Activated naive CD4-positive, alpha-beta T cell treated with anti-CD3 and anti-CD28 coated beads for 36 hours (primary cell): ENCODE measurements at regions of chr4 and their contacts with region 1.

Region 1: DNA sequence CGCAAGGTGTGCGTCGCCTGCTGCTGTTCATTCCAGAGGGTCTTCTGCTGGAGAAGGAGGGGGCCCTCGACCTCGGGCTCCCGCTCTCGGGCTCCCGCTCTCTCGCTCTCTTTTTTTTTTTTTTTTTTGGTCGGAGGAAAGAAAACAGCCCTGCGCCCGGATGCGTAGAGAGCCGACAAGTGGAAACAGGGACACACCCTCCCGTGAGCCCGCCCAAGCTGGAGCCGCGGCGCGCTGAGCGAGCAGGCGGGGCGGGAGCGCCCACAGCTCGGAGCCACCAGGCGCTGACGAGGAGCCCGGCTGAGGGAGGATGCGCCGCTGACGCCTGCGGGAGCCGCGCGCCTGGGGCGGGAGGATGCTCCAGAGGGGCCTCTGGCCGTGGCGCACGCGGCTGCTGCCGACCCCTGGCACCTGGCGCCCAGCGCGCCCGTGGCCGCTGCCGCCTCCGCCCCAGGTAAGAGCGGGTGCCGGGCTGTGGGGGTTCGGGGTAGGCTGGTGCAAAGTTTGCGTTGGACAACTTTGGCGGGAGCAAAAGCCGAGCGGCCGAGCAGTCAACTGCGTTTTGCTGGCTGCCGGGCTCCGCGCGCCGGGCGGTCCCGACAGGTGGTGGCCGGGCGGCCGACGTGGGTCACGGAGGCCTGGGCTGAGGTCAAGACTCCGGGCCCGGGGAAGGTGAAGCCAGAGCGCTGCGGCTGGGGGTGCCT is at the start of gene MCUB:
- DNase-seq: peak; percentile 94
- H3K4me3 Mint-ChIP-seq: peak within 1 kb of the TSS; percentile 88
- H3K27ac Mint-ChIP-seq: peak within 1 kb of the TSS; percentile 95
- H3K4me1 Mint-ChIP-seq: peaks cover 54% of the 10 kb centered on the region
- H3K27me3 Mint-ChIP-seq: no peaks in the 10 kb centered on the region
- total RNA-seq, gene MCUB: 69.1 to 71.8 TPM

Region 2: DNA sequence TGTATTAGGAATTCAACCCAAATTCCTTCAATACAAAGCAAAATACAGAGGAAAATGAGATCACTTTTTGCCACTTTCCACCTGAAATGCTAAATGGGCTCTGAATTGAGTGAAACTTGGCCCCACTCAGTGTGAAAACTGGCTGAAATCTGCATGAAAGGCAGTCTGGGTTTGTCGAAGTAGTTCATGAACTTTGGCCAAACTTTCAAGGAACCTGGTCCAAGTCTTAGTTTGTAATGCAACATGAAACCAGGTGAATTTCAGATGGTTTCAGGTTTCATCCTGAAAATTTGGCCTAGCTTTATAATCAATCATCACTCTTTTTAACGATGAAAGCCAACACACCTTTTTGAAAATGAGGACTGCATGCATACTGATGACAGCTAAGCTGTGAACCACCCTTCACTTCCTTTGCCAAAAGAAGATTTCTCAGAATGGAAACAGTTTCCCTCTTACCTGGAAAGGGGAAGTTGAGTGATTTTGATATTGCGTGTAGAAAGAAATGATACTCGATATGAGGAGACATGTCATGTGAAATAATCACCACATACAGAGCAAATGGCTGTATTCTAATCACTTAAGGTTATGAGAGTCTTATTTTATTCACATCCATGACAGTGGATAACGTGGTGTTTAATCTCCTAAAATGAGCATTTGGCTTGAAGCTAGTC is 587.4 kb before region 1 on chr4:
- CTCF ChIA-PET with region 1: no interaction called
- intact Hi-C with region 1: loop called (anchors 2 kb)
- DNase-seq: peak; percentile 11
- H3K4me3 Mint-ChIP-seq: no peak overlapping the region
- H3K27ac Mint-ChIP-seq: peak overlapping the region; percentile 76
- H3K4me1 Mint-ChIP-seq: peaks cover 23% of the 10 kb centered on the region
- H3K27me3 Mint-ChIP-seq: no peaks in the 10 kb centered on the region

Region 3: DNA sequence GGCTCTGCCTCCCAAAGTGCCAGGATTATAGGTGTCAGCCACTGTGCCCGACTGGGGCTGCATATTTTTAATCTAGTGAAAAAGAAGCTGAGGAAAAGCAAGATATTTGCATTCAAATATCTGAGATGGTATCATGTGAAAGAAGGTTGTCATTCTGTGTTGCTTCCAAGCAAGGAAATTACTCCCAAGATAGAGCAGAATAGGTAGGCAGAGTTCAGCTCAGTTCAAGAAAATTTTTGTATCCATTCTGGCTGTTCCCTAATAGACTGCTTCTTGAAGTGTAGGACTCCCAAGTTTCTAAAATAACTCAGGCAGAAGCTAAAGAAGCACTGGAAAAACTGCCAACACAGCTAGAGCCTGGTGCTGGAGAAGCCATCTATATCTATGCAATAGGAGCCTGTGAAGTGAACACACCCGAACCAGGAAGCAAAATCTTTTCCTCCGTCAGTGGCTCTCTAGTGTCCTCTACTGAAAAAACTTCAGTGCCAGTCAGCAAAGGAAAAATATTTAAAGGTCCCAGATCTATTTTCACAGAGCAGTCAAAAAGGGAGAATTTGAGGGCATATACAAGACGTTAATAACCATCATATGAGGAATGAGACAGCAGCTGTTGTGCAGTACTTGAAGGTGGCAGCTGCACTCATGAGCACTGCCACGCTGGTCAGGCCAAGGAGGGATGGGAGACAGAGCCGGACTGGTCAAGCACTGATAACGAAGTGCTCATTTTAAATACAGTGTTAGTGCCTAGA is 14.1 kb after region 1 on chr4:
- CTCF ChIA-PET with region 1: interaction called, 13 read pairs
- intact Hi-C with region 1: loop called (anchors 1 kb)
- DNase-seq: peak; percentile 42
- H3K4me3 Mint-ChIP-seq: peak overlapping the region; percentile 39
- H3K27ac Mint-ChIP-seq: no peak overlapping the region
- H3K4me1 Mint-ChIP-seq: peaks cover 74% of the 10 kb centered on the region
- H3K27me3 Mint-ChIP-seq: no peaks in the 10 kb centered on the region

Region 4: GRCh38 chr4:109648266-109648996 is 88.3 kb after region 1 on chr4:
- CTCF ChIA-PET with region 1: no interaction called
- intact Hi-C with region 1: loop called (anchors 1 kb)
- DNase-seq: no peak
- H3K4me3 Mint-ChIP-seq: peak overlapping the region; percentile 59
- H3K27ac Mint-ChIP-seq: peak overlapping the region; percentile 77
- H3K4me1 Mint-ChIP-seq: peaks cover 45% of the 10 kb centered on the region
- H3K27me3 Mint-ChIP-seq: no peaks in the 10 kb centered on the region

Region 5: DNA sequence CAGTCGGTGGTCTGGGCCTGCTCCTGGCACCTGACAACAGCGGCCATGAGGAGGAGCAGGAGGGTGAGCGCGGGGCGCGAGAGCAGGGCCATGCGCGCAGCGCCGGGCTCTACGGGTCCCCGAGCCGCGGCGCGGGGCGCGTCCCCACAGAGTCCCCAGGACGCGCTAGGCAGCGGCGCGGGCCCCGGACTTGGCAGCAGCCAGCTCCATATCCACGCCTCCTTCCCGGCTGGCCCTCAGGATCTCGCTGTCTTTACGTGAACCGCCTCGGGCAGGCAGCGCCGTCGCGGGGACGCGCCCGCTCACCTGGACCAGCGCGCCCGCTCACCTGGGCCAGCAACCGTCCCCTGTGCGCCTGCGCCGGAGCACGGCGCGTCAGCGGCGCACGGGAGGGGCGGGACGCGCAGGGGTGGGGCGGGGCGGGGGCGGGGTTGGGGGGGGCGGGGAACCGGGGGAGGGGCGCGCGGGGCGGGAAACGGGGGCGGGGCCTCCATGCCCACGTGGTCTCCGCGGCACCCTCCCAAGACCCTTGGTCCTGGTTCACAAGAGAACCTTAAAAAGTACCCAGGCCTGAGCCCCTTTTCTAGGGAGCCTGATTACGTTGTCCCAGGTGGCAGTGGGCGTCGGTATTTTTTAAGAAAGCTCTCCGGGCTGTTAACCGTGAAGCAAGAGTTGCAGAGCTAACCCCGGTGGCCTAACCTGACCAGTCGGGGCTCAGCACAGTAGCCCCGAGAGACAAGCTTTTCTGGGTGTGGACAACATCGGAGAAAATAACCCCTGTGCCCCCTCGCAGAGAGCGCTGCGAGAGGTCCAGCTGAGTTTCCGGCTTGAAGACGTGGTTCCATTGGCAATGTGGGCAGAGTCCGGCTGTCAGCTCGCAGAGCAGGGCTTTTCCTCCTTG is 169.8 kb after region 1 on chr4 and contains the start of gene PLA2G12A:
- CTCF ChIA-PET with region 1: no interaction called
- intact Hi-C with region 1: loop called (anchors 1 kb)
- DNase-seq: peak; percentile 66
- H3K4me3 Mint-ChIP-seq: peak within 1 kb of the TSS; percentile 87
- H3K27ac Mint-ChIP-seq: peak within 1 kb of the TSS; percentile 39
- H3K4me1 Mint-ChIP-seq: peaks cover 15% of the 10 kb centered on the region
- H3K27me3 Mint-ChIP-seq: no peaks in the 10 kb centered on the region
- total RNA-seq, gene PLA2G12A: 22.8 to 24.3 TPM

Region 6: GRCh38 chr4:109947457-109947856 is 387.3 kb after region 1 on chr4:
- CTCF ChIA-PET with region 1: no interaction called
- intact Hi-C with region 1: loop called (anchors 2 kb)
- DNase-seq: no peak
- H3K4me3 Mint-ChIP-seq: no peak overlapping the region
- H3K27ac Mint-ChIP-seq: peak overlapping the region; percentile 65
- H3K4me1 Mint-ChIP-seq: peaks cover 27% of the 10 kb centered on the region
- H3K27me3 Mint-ChIP-seq: no peaks in the 10 kb centered on the region

Region 7: DNA sequence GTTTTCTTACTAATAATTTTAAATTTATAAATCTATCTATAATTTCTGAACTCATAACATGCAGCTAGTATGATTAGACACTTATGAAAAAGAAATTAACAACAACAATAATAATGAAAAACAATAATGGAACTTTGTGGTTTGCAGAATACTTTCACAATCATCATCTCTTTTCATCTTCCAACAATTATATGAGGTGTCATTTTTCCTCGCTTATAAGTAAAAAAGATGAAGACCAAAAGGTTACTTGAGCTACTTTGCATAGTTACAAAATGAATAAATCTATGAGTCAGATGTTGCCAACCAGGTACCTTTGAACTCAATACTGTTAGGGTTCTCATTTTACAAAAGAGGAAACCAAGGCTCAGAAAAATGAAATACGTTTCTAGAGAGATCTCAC is 736.8 kb after region 1 on chr4:
- CTCF ChIA-PET with region 1: no interaction called
- intact Hi-C with region 1: loop called (anchors 2 kb)
- DNase-seq: no peak
- H3K4me3 Mint-ChIP-seq: no peak overlapping the region
- H3K27ac Mint-ChIP-seq: no peak overlapping the region
- H3K4me1 Mint-ChIP-seq: peaks cover 13% of the 10 kb centered on the region
- H3K27me3 Mint-ChIP-seq: peaks cover 56% of the 10 kb centered on the region